Activated CD4-positive, alpha-beta memory T cell treated with anti-CD3 and anti-CD28 coated beads for 36 hours (primary cell): ENCODE measurements at regions of chr11 and their contacts with region 1.

Region 1: GRCh38 chr11:102346748-102347461 is at the start of gene BIRC2:
- DNase-seq: peak; percentile 96
- H3K4me3 Mint-ChIP-seq: peak within 1 kb of the TSS; percentile 90
- H3K27ac Mint-ChIP-seq: peak within 1 kb of the TSS; percentile 100
- H3K4me1 Mint-ChIP-seq: peaks cover 44% of the 10 kb centered on the region
- H3K27me3 Mint-ChIP-seq: no peaks in the 10 kb centered on the region
- total RNA-seq, gene BIRC2: 33.7 to 34.3 TPM

Region 2: DNA sequence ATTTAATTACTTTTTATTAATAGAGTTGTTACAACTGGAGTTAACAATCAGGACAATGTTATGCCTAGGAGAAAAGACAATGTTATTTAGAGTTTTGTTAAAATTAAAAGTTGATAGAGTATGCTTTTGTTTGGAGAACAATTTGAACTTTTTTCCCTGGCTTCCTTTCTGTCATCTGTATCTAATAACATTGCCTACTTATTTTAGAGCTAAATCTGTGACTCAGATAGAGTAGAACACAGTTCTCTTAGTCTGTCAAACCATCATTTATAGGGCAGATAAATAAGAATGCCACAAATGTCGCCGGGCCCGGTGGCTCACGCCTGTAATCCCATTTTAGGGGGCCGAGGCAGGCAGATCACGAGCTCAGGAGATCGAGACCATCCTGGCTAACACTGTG is 265.6 kb before region 1 on chr11:
- CTCF ChIA-PET with region 1: no interaction called
- POLR2A ChIA-PET with region 1: no interaction called
- intact Hi-C with region 1: no loop called
- DNase-seq: no peak
- H3K4me3 Mint-ChIP-seq: no peak overlapping the region
- H3K27ac Mint-ChIP-seq: no peak overlapping the region
- H3K4me1 Mint-ChIP-seq: no peaks in the 10 kb centered on the region
- H3K27me3 Mint-ChIP-seq: peaks cover 9% of the 10 kb centered on the region

Region 3: DNA sequence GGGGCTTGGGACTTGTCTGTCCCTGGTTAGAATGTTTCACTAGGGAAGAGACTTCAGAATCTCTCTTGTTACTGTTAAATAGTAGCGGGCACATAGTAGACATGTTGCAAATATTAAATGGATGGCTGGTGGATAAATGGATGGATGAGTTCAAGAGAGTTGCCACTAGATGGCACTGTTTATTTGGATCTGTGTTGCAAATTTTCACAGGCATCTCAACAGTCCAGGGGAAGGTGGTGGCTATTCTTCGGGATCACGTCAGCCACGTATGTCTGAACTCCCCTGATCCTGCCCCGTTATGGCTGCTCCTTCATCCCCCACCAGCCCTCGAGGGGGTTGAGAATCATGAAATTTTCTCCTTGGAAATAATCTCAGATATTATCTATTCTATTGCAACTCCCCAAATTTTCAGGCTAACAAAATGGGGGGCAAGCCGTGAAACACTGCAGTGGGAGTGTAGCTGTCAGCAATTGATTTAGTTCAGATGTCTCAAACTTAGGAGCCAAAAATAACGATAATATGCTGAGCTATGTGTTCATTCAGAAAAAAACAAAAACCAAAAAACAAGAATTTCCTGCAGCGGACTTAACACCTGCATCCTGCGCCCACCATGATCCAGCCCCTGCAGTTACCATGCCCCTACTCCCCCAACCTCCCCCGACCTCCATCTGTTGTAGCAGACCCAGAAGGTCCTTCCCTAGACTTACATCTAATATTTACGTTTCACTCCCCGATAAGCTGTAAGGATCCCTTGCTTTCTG is 58.8 kb before region 1 on chr11:
- CTCF ChIA-PET with region 1: interaction called, 103 read pairs
- POLR2A ChIA-PET with region 1: no interaction called
- intact Hi-C with region 1: loop called (anchors 1 kb)
- DNase-seq: peak; percentile 33
- H3K4me3 Mint-ChIP-seq: peak overlapping the region; percentile 38
- H3K27ac Mint-ChIP-seq: no peak overlapping the region
- H3K4me1 Mint-ChIP-seq: peaks cover 25% of the 10 kb centered on the region
- H3K27me3 Mint-ChIP-seq: no peaks in the 10 kb centered on the region

Region 4: DNA sequence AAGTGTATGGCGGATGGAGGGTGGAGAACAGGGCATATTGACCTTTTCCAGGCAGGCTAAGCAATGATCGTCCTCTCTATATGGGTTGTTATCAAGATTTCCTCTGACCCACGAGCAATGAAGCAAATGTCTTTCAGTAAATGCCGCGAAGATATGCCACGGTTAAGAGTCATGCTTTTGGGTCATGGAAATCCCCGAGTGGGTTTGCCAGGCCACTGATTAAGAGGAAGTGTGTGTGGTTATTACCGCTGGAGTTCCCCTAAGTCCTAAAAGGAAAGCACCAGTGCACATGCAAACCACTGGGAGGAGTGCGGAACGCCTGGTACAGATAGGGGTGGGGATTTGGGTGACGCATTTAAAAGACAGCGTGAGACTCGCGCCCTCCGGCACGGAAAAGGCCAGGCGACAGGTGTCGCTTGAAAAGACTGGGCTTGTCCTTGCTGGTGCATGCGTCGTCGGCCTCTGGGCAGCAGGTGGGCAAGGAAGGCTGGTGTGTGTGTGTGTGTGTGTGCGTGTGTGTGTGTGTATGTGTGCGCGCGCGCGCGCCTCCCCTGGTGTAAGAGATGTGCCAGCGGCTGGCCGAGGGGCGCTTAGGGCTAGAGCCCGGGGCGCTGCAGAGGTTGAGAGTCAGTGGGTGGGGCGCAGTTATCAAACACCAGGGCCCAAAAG is 29.7 kb before region 1 on chr11 and contains the start of gene BIRC3:
- CTCF ChIA-PET with region 1: interaction called, 52 read pairs
- POLR2A ChIA-PET with region 1: interaction called, 8 read pairs
- intact Hi-C with region 1: loop called (anchors 1 kb)
- DNase-seq: peak; percentile 96
- H3K4me3 Mint-ChIP-seq: peak within 1 kb of the TSS; percentile 95
- H3K27ac Mint-ChIP-seq: peak within 1 kb of the TSS; percentile 100
- H3K4me1 Mint-ChIP-seq: peaks cover 56% of the 10 kb centered on the region
- H3K27me3 Mint-ChIP-seq: no peaks in the 10 kb centered on the region
- total RNA-seq, gene BIRC3: 135 to 139 TPM

Region 5: DNA sequence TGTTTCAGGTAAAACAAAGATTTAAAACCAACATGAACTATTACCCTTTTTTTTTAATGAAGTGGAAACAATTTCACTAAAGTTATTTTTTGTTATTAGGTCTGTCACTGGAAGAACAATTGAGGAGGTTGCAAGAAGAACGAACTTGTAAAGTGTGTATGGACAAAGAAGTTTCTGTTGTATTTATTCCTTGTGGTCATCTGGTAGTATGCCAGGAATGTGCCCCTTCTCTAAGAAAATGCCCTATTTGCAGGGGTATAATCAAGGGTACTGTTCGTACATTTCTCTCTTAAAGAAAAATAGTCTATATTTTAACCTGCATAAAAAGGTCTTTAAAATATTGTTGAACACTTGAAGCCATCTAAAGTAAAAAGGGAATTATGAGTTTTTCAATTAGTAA is 31.0 kb after region 1 on chr11:
- CTCF ChIA-PET with region 1: no interaction called
- POLR2A ChIA-PET with region 1: no interaction called
- intact Hi-C with region 1: no loop called
- DNase-seq: no peak
- H3K4me3 Mint-ChIP-seq: no peak overlapping the region
- H3K27ac Mint-ChIP-seq: no peak overlapping the region
- H3K4me1 Mint-ChIP-seq: peaks cover 19% of the 10 kb centered on the region
- H3K27me3 Mint-ChIP-seq: no peaks in the 10 kb centered on the region

Region 6: GRCh38 chr11:102396708-102397563 is 50.0 kb after region 1 on chr11:
- CTCF ChIA-PET with region 1: interaction called, 12 read pairs
- POLR2A ChIA-PET with region 1: no interaction called
- intact Hi-C with region 1: loop called (anchors 2 kb)
- DNase-seq: no peak
- H3K4me3 Mint-ChIP-seq: no peak overlapping the region
- H3K27ac Mint-ChIP-seq: peak overlapping the region; percentile 67
- H3K4me1 Mint-ChIP-seq: peaks cover 46% of the 10 kb centered on the region
- H3K27me3 Mint-ChIP-seq: no peaks in the 10 kb centered on the region

Region 7: GRCh38 chr11:102430158-102430836 is 83.4 kb after region 1 on chr11:
- CTCF ChIA-PET with region 1: interaction called, 3 read pairs
- POLR2A ChIA-PET with region 1: no interaction called
- intact Hi-C with region 1: loop called (anchors 1 kb)
- DNase-seq: peak; percentile 74
- H3K4me3 Mint-ChIP-seq: peak overlapping the region; percentile 45
- H3K27ac Mint-ChIP-seq: peak overlapping the region; percentile 94
- H3K4me1 Mint-ChIP-seq: peaks cover 69% of the 10 kb centered on the region
- H3K27me3 Mint-ChIP-seq: no peaks in the 10 kb centered on the region

Region 8: DNA sequence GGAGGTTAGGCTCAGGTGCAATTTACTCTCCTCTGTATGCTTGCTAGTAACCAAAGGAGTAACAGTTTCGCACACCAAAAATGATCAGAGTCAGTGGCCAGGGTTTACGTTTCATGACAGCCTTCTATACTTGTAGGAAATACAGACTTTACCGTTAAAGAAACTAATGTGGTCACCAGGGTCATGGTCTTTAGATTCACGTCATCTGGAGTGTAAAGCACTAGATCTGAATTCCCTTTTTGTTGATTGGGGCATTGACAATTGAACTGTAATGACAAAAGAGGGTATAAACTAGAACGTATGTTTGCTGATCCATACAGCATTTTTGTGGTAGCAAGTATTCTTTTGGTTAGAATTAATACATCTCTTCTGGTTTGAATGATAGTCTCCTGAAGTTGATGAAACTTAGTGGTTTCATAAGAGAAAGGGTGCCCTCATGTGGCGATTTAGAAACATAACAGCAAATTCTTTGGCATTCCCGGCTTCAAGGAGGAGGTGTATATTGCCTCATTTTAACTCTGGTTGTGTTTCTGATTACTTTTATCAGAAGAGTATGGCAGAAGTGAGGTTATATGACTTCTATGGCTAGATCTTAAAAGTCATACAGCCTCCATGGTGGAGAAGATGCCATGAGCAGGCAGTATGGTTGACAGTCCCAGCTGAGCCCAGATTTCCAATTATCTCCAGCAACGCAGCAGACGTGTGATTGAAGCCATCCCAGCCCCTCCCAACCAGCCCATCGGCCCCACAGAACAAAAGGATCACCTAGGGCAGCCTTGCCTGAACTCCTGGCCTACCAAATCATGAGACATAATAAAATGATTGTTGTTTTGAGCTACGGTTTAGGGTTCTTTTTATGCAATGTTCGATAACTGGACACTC is 148.5 kb after region 1 on chr11:
- CTCF ChIA-PET with region 1: interaction called, 66 read pairs
- POLR2A ChIA-PET with region 1: no interaction called
- intact Hi-C with region 1: loop called (anchors 1 kb)
- DNase-seq: peak; percentile 22
- H3K4me3 Mint-ChIP-seq: no peak overlapping the region
- H3K27ac Mint-ChIP-seq: no peak overlapping the region
- H3K4me1 Mint-ChIP-seq: peaks cover 18% of the 10 kb centered on the region
- H3K27me3 Mint-ChIP-seq: peaks cover 7% of the 10 kb centered on the region

Region 9: GRCh38 chr11:102614485-102614884 is 267.6 kb after region 1 on chr11:
- CTCF ChIA-PET with region 1: interaction called, 92 read pairs
- POLR2A ChIA-PET with region 1: interaction called, 3 read pairs
- intact Hi-C with region 1: no loop called
- DNase-seq: no peak
- H3K4me3 Mint-ChIP-seq: no peak overlapping the region
- H3K27ac Mint-ChIP-seq: no peak overlapping the region
- H3K4me1 Mint-ChIP-seq: peaks cover 10% of the 10 kb centered on the region
- H3K27me3 Mint-ChIP-seq: no peaks in the 10 kb centered on the region